Left cardiac atrium (tissue), 4 donors: ENCODE measurements at regions of chr22 and their contacts with region 1.

Region 1: DNA sequence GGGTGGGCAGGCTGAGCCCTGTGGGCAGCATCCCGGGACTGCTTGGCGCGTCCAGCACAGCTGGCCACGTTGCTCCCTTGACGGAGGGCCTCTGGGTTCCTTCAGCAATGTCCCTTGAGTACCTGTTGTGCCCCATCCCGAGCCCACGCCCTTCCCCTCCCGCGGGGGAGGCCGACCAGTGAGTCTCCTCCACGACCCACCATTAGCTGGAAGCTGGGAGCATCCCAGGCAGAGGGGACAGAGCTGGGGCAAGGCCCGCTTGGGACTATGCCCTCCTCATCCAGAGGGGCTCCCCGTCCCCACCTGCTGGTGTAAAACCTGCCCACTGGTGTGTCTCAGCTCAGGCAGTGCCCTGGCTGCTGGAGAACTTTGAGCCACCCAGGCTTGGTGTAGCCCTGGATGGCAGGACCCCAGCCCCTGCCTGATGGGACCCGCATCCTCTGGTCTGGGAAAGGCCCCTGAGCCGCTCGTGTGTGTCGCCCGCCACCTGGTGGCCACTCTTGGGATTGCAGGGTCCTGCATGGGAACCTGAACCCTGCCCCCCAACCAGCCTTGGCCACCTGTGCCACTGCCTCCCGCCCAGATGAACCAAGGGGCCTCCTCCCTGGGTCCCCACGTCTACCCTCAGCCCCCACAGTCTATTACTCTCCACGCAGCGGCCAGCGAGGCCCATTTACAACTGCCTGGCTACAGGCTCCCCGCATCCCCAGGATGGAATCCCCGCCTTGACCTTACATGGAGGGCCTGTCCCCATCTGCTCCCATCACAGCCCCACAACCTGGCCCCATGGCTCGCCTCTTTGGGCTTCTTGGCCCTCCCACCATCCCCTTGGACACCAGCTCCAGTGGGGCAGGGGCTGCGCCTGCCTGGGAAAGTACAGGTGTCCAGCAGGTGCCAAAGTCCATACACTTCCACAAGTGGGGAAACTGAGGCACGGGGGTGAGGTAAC is 16.6 kb upstream of the ARHGAP8 start:
- DNase-seq: peak; percentile 78
- ATAC-seq: peak; percentile 44 to 54

Region 2: GRCh38 chr22:44639001-44639760 is 96.6 kb before region 1 on chr22:
- intact Hi-C with region 1: no loop called
- DNase-seq: peak; percentile 68
- ATAC-seq: peak; percentile 44 to 75

Region 3: DNA sequence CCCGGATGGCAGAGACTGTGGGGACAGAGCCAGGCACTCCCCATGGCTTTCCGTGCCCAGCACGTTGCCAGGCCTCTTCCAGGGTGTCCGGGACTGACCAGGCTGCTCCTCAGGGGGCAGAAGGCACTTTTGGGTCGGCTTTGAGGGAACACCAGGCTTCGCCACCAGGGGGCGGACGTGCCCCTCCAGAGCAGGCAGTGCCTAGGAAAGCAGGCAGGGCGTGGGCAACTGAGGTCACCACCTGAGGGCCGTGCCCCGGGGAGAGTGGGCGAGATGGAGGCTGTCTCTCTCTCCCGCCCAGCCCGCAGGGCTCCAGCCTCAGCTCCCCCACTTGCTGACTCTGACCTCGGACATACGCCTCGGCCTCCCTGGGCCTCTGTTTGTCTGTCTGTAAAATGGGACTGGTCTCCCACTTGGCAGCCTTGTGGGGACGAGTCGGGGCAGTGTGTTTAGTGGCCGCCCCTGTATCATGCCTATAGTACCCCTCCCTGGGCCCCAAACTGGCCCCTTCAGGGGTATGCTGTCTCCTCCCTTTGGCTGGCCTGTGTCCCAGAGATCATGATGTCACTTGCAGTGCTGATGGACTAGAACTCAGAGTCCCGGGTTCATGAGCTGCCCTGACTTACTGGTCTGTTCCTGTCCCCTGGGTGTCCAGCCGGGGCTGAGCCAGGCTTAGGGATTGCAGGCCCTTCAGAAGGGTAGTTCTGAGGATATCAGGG is 38.2 kb before region 1 on chr22:
- intact Hi-C with region 1: loop called (anchors 1 to 5 kb)
- DNase-seq: peak; percentile 87
- ATAC-seq: peak; percentile 39 to 63